ENCODE measurements at regions of chr11 and their contacts with region 1.

Region 1: GRCh38 chr11:2196970-2197770 is 25.6 kb upstream of the TH start:
- DNase-seq: peak; percentile 62 to 76 (median 73)
- H3K4me3 ChIP-seq: no peak overlapping the region
- H3K27ac ChIP-seq: no peak overlapping the region
- H3K4me1 ChIP-seq: peaks cover 0 to 27% (median 14%) of the 10 kb centered on the region in 4 experiments
- H3K27me3 ChIP-seq: peaks cover 0 to 2% (median 0%) of the 10 kb centered on the region in 5 experiments

Region 2: DNA sequence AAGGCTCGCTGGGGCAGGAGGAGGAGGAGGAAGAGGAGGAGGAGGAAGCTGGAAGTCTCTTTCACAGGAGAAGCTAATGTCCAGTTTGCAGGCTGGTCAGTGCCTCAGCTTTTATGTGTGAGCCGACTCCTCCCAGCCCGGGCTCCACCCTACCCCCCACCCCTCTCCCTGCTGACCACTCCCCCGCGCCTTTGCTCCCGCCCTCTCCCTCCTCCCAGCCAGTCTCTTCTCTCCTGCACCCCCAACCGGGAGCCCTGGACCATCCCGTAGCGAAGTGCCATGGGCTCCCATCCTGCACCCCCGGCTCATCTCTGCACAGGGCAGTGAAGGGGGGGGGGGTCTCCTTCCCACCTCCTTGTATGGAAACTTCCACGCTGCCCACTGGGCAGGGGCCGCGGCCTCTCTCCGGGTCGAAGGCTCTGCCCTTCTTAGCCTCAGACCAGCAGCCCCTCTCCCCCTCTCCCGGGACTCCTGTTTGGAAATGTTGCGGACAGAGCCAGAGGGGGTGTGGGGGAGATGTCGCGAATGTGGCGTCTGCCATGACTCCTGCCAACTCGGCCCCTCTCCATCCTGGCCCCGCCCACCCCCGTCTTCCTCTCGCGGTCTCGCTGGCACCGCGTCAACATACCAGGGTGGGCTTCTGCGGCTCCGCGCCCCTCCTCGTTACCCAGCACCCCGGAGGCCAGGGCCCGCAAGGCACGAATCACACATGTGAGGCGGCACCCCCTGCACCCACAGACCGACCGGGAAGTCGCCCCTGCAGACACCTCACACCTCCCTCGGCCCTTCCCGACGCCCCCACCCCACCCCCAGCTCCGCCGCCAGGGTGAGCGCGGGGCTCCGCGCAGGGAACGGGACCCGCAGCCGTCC is 59.7 kb before region 1 on chr11:
- CTCF ChIA-PET with region 1: no interaction called
- POLR2A ChIA-PET with region 1: no interaction called
- DNase-seq: peak in 1 of 3 donors; percentile 26
- H3K4me3 ChIP-seq: peak overlapping the region in 1 of 7 experiments; percentile 4
- H3K27ac ChIP-seq: no peak overlapping the region
- H3K4me1 ChIP-seq: peaks cover 0 to 23% (median 9%) of the 10 kb centered on the region in 4 experiments
- H3K27me3 ChIP-seq: peaks cover 8 to 97% (median 33%) of the 10 kb centered on the region in 5 experiments

Region 3: GRCh38 chr11:2158966-2159365 is 38.2 kb before region 1 on chr11:
- CTCF ChIA-PET with region 1: no interaction called
- POLR2A ChIA-PET with region 1: no interaction called
- DNase-seq: no peak
- H3K4me3 ChIP-seq: no peak overlapping the region
- H3K27ac ChIP-seq: no peak overlapping the region
- H3K4me1 ChIP-seq: no peaks in the 10 kb centered on the region
- H3K27me3 ChIP-seq: peaks cover 0 to 3% (median 0%) of the 10 kb centered on the region in 5 experiments

Region 4: GRCh38 chr11:2186669-2187279 is 10.4 kb before region 1 on chr11:
- CTCF ChIA-PET with region 1: interaction called, 25 read pairs
- POLR2A ChIA-PET with region 1: no interaction called
- DNase-seq: peak; percentile 84 to 90 (median 89)
- H3K4me3 ChIP-seq: peak overlapping the region in 1 of 7 experiments; percentile 40
- H3K27ac ChIP-seq: no peak overlapping the region
- H3K4me1 ChIP-seq: peaks cover 5 to 41% (median 24%) of the 10 kb centered on the region in 4 experiments
- H3K27me3 ChIP-seq: no peaks in the 10 kb centered on the region